GM12878 (cell line): ENCODE measurements at regions of chr2 and their contacts with region 1.

Region 1: DNA sequence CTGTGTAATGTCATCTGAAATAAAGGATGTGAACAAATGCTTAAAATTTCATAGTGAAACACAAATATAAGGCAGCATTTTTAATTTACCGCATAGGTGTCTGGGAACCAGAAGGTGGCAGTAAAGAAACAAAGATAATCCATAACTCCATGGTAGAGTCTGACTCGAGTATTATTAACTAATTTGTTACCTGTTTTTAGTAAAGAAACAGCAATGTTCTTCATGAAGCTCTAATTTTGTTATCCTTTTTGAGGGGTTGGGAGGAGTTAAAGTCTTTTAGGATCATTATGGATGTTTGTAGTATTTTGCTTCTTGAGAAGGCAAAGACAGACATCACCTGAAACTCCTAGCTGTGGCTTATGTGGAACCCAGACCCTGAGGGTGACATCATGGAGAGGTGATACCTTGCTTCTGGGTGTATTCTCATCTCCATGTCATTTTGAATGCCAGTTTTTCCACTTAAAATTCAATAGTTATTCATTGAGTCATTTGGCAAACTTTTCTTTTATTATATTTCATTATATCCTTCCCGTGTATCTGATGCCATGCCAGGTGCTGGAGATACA is 286.2 kb upstream of the EPAS1 start:
- DNase-seq: no peak
- ATAC-seq: peak; percentile 85
- H3K4me3 ChIP-seq: no peak overlapping the region
- H3K27ac ChIP-seq: no peak overlapping the region
- H3K4me1 ChIP-seq: peaks cover 4% of the 10 kb centered on the region; the same call in 1 of the 2 replicates
- H3K27me3 ChIP-seq: no peaks in the 10 kb centered on the region
- CTCF ChIP-seq: peak; percentile 40 to 67 (median 55); a peak in 5 of 6 replicates
- EP300 ChIP-seq: no peak
- POLR2A ChIP-seq: no peak
- RAD21 ChIP-seq: peak; percentile 67

Region 2: GRCh38 chr2:45951025-45951727 is 59.8 kb before region 1 on chr2:
- CTCF ChIA-PET with region 1: no interaction called
- POLR2A ChIA-PET with region 1: no interaction called
- RAD21 ChIA-PET with region 1: no interaction called
- SMC1A ChIA-PET with region 1: no interaction called
- in situ Hi-C with region 1: no loop called
- intact Hi-C with region 1: no loop called
- DNase-seq: no peak
- ATAC-seq: no peak
- H3K4me3 ChIP-seq: no peak overlapping the region
- H3K27ac ChIP-seq: no peak overlapping the region
- H3K4me1 ChIP-seq: no peaks in the 10 kb centered on the region
- H3K27me3 ChIP-seq: no peaks in the 10 kb centered on the region
- CTCF ChIP-seq: no peak
- EP300 ChIP-seq: no peak
- POLR2A ChIP-seq: no peak
- RAD21 ChIP-seq: no peak

Region 3: DNA sequence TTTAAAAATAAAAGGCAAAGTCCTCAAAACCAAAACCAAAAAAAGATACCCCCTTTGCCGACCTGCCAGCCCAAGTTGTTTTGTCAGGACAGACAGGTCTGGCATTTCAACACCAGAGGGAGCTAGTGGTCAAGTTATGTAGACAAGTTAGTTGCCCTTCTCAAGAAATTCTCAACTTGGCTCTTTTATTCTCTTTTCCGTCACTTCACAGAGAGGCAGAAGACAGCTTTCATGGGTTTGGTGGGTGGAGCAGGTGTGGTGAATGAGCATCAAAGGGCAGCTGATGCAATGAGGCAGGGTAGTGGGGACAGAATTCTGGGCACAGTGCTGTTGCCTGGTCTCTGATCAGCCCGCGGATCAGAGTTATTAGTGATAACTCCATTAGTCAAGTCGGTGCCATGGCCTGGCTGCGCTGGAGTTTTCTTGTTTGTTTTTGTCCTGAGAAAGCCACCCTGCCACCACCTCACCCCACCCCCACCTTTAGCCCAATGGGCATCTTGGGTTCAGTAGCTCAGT is 17.5 kb before region 1 on chr2:
- CTCF ChIA-PET with region 1: interaction called, 20 read pairs
- POLR2A ChIA-PET with region 1: no interaction called
- RAD21 ChIA-PET with region 1: interaction called, 6 read pairs
- SMC1A ChIA-PET with region 1: interaction called, 6 read pairs
- in situ Hi-C with region 1: no loop called
- intact Hi-C with region 1: no loop called
- DNase-seq: peak; percentile 23
- ATAC-seq: peak; percentile 90
- H3K4me3 ChIP-seq: no peak overlapping the region
- H3K27ac ChIP-seq: no peak overlapping the region
- H3K4me1 ChIP-seq: no peaks in the 10 kb centered on the region
- H3K27me3 ChIP-seq: no peaks in the 10 kb centered on the region
- CTCF ChIP-seq: peak; percentile 72 to 79 (median 79)
- EP300 ChIP-seq: no peak
- POLR2A ChIP-seq: no peak
- RAD21 ChIP-seq: peak; percentile 81

Region 4: GRCh38 chr2:46097714-46098480 is 86.9 kb after region 1 on chr2:
- CTCF ChIA-PET with region 1: no interaction called
- POLR2A ChIA-PET with region 1: no interaction called
- RAD21 ChIA-PET with region 1: no interaction called
- SMC1A ChIA-PET with region 1: no interaction called
- in situ Hi-C with region 1: no loop called
- intact Hi-C with region 1: no loop called
- DNase-seq: no peak
- ATAC-seq: peak; percentile 65
- H3K4me3 ChIP-seq: no peak overlapping the region
- H3K27ac ChIP-seq: no peak overlapping the region
- H3K4me1 ChIP-seq: no peaks in the 10 kb centered on the region
- H3K27me3 ChIP-seq: no peaks in the 10 kb centered on the region
- CTCF ChIP-seq: no peak
- EP300 ChIP-seq: no peak
- POLR2A ChIP-seq: no peak
- RAD21 ChIP-seq: no peak

Region 5: DNA sequence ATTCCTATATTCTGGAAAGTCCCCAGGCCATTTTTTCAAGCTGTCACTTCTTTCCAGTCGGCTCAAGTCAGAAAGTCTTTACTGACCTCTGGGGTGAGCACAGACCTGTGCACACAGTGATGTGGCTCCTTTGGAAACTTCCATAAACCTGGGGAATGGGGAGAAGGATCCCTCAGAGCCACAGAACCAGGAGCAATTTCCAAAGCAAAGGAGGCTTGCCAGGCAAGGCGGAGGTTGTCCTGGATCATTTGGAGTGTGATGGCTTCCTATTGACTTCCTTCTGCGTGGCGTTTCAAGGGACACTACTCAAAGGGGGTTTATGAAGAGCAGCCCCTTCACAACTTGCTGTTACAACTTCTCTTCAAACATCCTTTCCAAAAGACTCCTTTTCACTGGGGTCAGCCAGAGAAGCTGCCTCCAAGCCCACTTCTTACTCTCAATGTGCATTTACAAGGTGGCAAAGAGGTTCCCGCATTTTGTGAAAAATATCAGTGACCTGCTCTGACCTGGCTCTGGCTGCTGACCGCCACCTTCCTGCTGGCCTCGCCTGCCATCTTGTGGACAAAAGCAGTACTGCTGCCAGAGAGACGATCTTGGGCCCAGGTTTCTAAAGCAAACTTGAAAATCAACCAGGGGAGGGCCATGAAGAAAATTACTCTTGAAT is 450.1 kb after region 1 on chr2:
- CTCF ChIA-PET with region 1: interaction called, 31 read pairs
- POLR2A ChIA-PET with region 1: no interaction called
- RAD21 ChIA-PET with region 1: interaction called, 5 read pairs
- SMC1A ChIA-PET with region 1: interaction called, 10 read pairs
- in situ Hi-C with region 1: no loop called
- intact Hi-C with region 1: loop called (anchors 1 kb)
- DNase-seq: peak; percentile 39
- ATAC-seq: peak; percentile 85
- H3K4me3 ChIP-seq: no peak overlapping the region; the same call in 1 of the 2 replicates
- H3K27ac ChIP-seq: 0 out of 2 replicates have a peak overlapping the region, but pooled peaks have one; percentile 0
- H3K4me1 ChIP-seq: peaks cover 18% of the 10 kb centered on the region
- H3K27me3 ChIP-seq: no peaks in the 10 kb centered on the region; a peak in 1 of 4 replicates
- CTCF ChIP-seq: peak; percentile 97 to 99 (median 99); a peak in 5 of 6 replicates
- EP300 ChIP-seq: no peak
- POLR2A ChIP-seq: no peak
- RAD21 ChIP-seq: peak; percentile 96

Region 6: DNA sequence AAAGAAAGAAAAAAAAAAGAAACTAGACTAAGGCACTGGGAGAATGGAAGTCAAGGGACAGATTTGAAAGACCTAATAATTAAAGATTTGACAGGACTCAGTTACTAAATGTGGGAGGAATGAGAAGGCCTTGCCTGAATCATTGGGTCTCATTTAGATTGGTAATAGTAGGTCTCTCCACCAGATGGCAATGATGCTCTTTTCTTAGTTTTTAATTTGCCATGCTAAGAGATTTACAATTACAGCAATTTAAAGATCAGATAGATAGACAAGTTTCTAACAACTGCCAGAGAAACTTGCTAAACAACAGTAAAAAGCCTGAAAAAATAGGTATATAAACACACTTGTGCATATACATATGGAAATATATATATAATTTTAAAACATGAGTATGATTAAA is 621.3 kb after region 1 on chr2:
- CTCF ChIA-PET with region 1: no interaction called
- POLR2A ChIA-PET with region 1: no interaction called
- RAD21 ChIA-PET with region 1: no interaction called
- SMC1A ChIA-PET with region 1: no interaction called
- in situ Hi-C with region 1: loop called (anchors 25 kb)
- intact Hi-C with region 1: no loop called
- DNase-seq: no peak
- ATAC-seq: peak; percentile 60
- H3K4me3 ChIP-seq: no peak overlapping the region
- H3K27ac ChIP-seq: no peak overlapping the region
- H3K4me1 ChIP-seq: no peaks in the 10 kb centered on the region
- H3K27me3 ChIP-seq: no peaks in the 10 kb centered on the region
- CTCF ChIP-seq: peak; percentile 32 to 43 (median 42); a peak in 4 of 6 replicates
- EP300 ChIP-seq: no peak
- POLR2A ChIP-seq: no peak
- RAD21 ChIP-seq: peak; percentile 63